HCT116 (cell line): ENCODE measurements at regions of chrX and their contacts with region 1.

Region 1: DNA sequence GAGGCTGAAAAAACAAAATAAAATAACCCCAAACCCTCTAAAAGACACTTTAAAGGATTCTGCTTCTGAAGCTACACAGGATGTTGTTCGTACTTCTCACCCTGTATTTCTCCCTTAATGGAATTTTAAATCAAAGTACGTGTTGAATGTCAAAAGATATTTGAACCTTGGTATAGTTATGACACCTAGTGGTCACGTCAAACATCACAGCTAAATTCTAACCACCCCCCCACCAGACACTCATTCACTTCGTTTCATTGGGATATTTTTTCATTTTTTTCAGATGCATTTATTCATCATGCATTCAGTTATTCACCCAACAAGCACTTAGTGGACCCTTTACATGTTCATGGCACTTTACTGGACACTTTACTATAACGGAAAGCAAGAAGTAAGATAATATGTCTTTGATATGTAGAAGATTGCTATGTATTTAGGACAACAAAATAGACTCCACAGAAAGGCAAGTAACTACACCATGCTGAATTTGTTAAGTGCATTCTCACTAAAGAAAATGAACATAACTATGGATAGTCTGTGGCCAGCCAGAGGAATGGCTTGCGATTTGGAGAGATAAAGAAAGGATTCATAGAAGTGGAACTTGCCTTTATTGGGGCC is 62.5 kb upstream of the GPR174 start:
- DNase-seq: no peak
- ATAC-seq: no peak
- H3K4me3 ChIP-seq: no peak overlapping the region
- H3K27ac ChIP-seq: no peak overlapping the region
- H3K4me1 ChIP-seq: no peaks in the 10 kb centered on the region
- H3K27me3 ChIP-seq: no peaks in the 10 kb centered on the region
- CTCF ChIP-seq: peak in 2 of 3 experiments; percentile 6 to 37; a peak in 2 of 6 replicates
- POLR2A ChIP-seq: no peak
- RAD21 ChIP-seq: peak; percentile 24

Region 2: GRCh38 chrX:78119521-78120227 is 962.3 kb before region 1 on chrX:
- CTCF ChIA-PET with region 1: no interaction called
- POLR2A ChIA-PET with region 1: no interaction called
- RAD21 ChIA-PET with region 1: no interaction called
- intact Hi-C with region 1: loop called (anchors 5 kb)
- DNase-seq: no peak
- ATAC-seq: peak; percentile 63; the same call in 1 of the 2 replicates
- H3K4me3 ChIP-seq: no peak overlapping the region
- H3K27ac ChIP-seq: no peak overlapping the region
- H3K4me1 ChIP-seq: no peaks in the 10 kb centered on the region
- H3K27me3 ChIP-seq: no peaks in the 10 kb centered on the region
- CTCF ChIP-seq: peak in 2 of 3 experiments; percentile 24 to 38; a peak in 3 of 6 replicates
- POLR2A ChIP-seq: no peak
- RAD21 ChIP-seq: no peak

Region 3: GRCh38 chrX:78725287-78725686 is 356.7 kb before region 1 on chrX:
- CTCF ChIA-PET with region 1: no interaction called
- POLR2A ChIA-PET with region 1: no interaction called
- RAD21 ChIA-PET with region 1: no interaction called
- intact Hi-C with region 1: no loop called
- DNase-seq: no peak
- ATAC-seq: no peak
- H3K4me3 ChIP-seq: no peak overlapping the region
- H3K27ac ChIP-seq: no peak overlapping the region
- H3K4me1 ChIP-seq: no peaks in the 10 kb centered on the region
- H3K27me3 ChIP-seq: no peaks in the 10 kb centered on the region
- CTCF ChIP-seq: no peak
- POLR2A ChIP-seq: no peak
- RAD21 ChIP-seq: no peak

Region 4: DNA sequence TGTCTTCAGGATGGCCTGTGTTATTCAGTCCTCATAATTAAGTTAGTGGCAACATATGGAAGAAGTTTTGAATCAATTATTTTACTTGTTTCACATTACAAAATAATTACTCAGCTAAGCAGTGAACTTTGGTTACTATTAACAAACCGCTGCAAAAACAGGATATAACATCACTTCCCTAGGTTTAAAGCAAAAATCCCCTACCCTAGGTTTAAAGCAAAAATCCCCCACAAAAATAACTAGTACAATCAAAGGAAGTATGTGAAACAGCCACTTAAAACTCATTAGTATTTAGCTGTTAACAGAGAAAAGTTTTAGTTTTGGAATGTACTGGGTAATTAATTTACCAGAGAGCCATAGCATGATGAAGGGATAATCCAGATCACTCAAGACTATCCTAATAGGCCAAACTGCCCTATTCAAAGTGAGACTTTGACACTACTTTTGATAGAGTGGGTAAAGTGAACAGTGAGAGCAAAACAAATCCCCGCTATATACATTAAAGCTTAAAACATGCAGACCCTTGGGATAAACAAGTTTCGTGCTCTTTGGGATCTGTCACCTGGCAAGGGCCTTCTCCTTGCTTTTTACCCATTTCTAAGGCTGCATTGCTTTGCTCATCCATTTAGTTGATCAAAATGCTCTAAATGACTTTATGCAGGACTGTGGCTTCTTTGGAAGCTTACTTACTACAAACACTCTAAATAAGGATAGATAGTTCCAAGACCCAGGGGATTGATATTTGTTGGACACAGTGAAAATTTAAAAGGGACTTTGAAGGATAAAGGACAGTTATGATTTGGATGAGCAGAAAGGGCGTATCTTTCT is 26.1 kb after region 1 on chrX:
- CTCF ChIA-PET with region 1: no interaction called
- POLR2A ChIA-PET with region 1: no interaction called
- RAD21 ChIA-PET with region 1: no interaction called
- intact Hi-C with region 1: no loop called
- DNase-seq: no peak
- ATAC-seq: no peak
- H3K4me3 ChIP-seq: no peak overlapping the region
- H3K27ac ChIP-seq: no peak overlapping the region
- H3K4me1 ChIP-seq: no peaks in the 10 kb centered on the region
- H3K27me3 ChIP-seq: no peaks in the 10 kb centered on the region
- CTCF ChIP-seq: no peak
- POLR2A ChIP-seq: no peak
- RAD21 ChIP-seq: no peak

Region 5: DNA sequence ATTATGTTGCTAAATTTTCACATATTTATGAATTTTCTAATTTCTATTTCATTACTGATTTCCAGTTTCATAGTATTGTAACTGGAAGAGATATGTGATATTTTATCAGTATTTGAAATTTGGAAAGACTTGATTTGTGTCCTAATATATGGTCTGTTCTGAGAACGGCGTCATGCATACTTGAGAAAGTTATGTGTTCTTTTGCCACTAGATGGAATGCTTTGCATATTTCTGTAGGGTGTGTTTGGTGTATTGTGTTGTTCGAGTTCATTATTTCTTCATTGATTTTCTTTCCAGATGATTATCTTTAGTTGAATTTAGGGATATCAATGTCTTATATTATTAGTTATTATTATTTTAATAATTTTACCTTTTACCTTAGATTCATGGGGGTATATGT is 395.7 kb after region 1 on chrX:
- CTCF ChIA-PET with region 1: no interaction called
- POLR2A ChIA-PET with region 1: no interaction called
- RAD21 ChIA-PET with region 1: no interaction called
- intact Hi-C with region 1: no loop called
- DNase-seq: no peak
- ATAC-seq: no peak
- H3K4me3 ChIP-seq: no peak overlapping the region
- H3K27ac ChIP-seq: no peak overlapping the region
- H3K4me1 ChIP-seq: no peaks in the 10 kb centered on the region
- H3K27me3 ChIP-seq: no peaks in the 10 kb centered on the region
- CTCF ChIP-seq: no peak
- POLR2A ChIP-seq: no peak
- RAD21 ChIP-seq: no peak